ENCODE measurements at regions of chr18 and their contacts with region 1.

Region 1: GRCh38 chr18:23967321-23968089 is 47.0 kb upstream of the TTC39C start:
- DNase-seq: peak in 7 of 9 experiments; percentile 16 to 73 (median 44)
- ATAC-seq: peak; percentile 7
- H3K4me3 ChIP-seq: no peak overlapping the region
- H3K4me3 Mint-ChIP-seq: peak overlapping the region; percentile 43
- H3K27ac ChIP-seq: peak overlapping the region in 1 of 2 experiments; percentile 6
- H3K27ac Mint-ChIP-seq: peak overlapping the region; percentile 73
- H3K4me1 ChIP-seq: peaks cover 69% of the 10 kb centered on the region
- H3K4me1 Mint-ChIP-seq: peaks cover 77% of the 10 kb centered on the region
- H3K27me3 ChIP-seq: no peaks in the 10 kb centered on the region
- H3K27me3 Mint-ChIP-seq: no peaks in the 10 kb centered on the region
- CTCF ChIP-seq: no peak

Region 2: DNA sequence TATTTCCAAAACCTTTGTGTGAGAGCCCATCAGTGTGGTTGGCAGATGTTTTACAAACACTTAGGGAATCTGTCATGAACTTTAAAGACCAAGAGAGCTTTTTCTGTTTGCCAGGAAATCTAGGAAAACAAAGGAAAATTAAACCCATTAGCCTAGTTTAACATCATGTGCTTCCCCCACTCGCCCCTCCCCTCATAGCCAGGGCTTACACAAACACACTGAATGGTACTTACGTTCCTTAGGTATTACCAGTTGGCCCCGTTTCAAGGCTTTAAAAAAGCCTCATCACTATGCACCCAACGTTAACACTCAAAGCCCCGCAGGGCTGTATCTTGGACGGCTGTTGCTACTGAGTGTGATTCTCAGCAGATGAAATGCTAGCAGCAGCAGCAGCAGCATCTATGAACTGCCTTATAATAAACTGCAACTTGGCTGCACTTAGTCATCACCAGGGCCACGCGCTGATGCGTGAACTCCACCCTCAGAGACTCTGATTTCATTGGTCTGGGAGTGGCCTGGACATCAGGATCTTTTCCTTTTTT is 26.9 kb after region 1 on chr18:
- CTCF ChIA-PET with region 1: interaction called, 10 read pairs
- POLR2A ChIA-PET with region 1: interaction called, 28 read pairs
- intact Hi-C with region 1: loop called (anchors 1 to 2 kb)
- DNase-seq: peak in 4 of 9 experiments; percentile 47 to 57 (median 52)
- ATAC-seq: peak; percentile 30
- H3K4me3 ChIP-seq: no peak overlapping the region
- H3K4me3 Mint-ChIP-seq: peak overlapping the region; percentile 85
- H3K27ac ChIP-seq: peak overlapping the region in 1 of 2 experiments; percentile 27
- H3K27ac Mint-ChIP-seq: peak overlapping the region; percentile 91
- H3K4me1 ChIP-seq: peaks cover 26% of the 10 kb centered on the region
- H3K4me1 Mint-ChIP-seq: peaks cover 65% of the 10 kb centered on the region
- H3K27me3 ChIP-seq: no peaks in the 10 kb centered on the region
- H3K27me3 Mint-ChIP-seq: no peaks in the 10 kb centered on the region
- CTCF ChIP-seq: no peak

Region 3: GRCh38 chr18:24063121-24063731 is 95.7 kb after region 1 on chr18:
- CTCF ChIA-PET with region 1: no interaction called
- POLR2A ChIA-PET with region 1: no interaction called
- intact Hi-C with region 1: loop called in 1 of 2 experiments (anchors 5 kb)
- DNase-seq: no peak
- ATAC-seq: peak; percentile 58
- H3K4me3 ChIP-seq: no peak overlapping the region
- H3K4me3 Mint-ChIP-seq: no peak overlapping the region
- H3K27ac ChIP-seq: no peak overlapping the region
- H3K27ac Mint-ChIP-seq: peak overlapping the region; percentile 22
- H3K4me1 ChIP-seq: no peaks in the 10 kb centered on the region
- H3K4me1 Mint-ChIP-seq: peaks cover 68% of the 10 kb centered on the region
- H3K27me3 ChIP-seq: no peaks in the 10 kb centered on the region
- H3K27me3 Mint-ChIP-seq: no peaks in the 10 kb centered on the region
- CTCF ChIP-seq: no peak

Region 4: GRCh38 chr18:24075731-24076130 is 108.2 kb after region 1 on chr18:
- CTCF ChIA-PET with region 1: interaction called, 4 read pairs
- POLR2A ChIA-PET with region 1: interaction called, 4 read pairs
- intact Hi-C with region 1: loop called (anchors 1 to 2 kb)
- DNase-seq: no peak
- ATAC-seq: no peak
- H3K4me3 ChIP-seq: no peak overlapping the region
- H3K4me3 Mint-ChIP-seq: no peak overlapping the region
- H3K27ac ChIP-seq: no peak overlapping the region
- H3K27ac Mint-ChIP-seq: peak overlapping the region; percentile 82
- H3K4me1 ChIP-seq: peaks cover 12% of the 10 kb centered on the region
- H3K4me1 Mint-ChIP-seq: peaks cover 58% of the 10 kb centered on the region
- H3K27me3 ChIP-seq: no peaks in the 10 kb centered on the region
- H3K27me3 Mint-ChIP-seq: no peaks in the 10 kb centered on the region
- CTCF ChIP-seq: no peak

Region 5: GRCh38 chr18:24080861-24081260 is 113.4 kb after region 1 on chr18:
- CTCF ChIA-PET with region 1: interaction called, 4 read pairs
- POLR2A ChIA-PET with region 1: interaction called, 4 read pairs
- intact Hi-C with region 1: loop called (anchors 1 to 2 kb)
- DNase-seq: peak in 4 of 9 experiments; percentile 20 to 74 (median 56)
- ATAC-seq: peak; percentile 59
- H3K4me3 ChIP-seq: no peak overlapping the region
- H3K4me3 Mint-ChIP-seq: peak overlapping the region; percentile 26
- H3K27ac ChIP-seq: peak overlapping the region; percentile 10 to 13
- H3K27ac Mint-ChIP-seq: peak overlapping the region; percentile 84
- H3K4me1 ChIP-seq: peaks cover 16% of the 10 kb centered on the region
- H3K4me1 Mint-ChIP-seq: peaks cover 44% of the 10 kb centered on the region
- H3K27me3 ChIP-seq: no peaks in the 10 kb centered on the region
- H3K27me3 Mint-ChIP-seq: no peaks in the 10 kb centered on the region
- CTCF ChIP-seq: no peak